Left colon (tissue), 2 donors: ENCODE measurements at regions of chr3 and their contacts with region 1.

Region 1: DNA sequence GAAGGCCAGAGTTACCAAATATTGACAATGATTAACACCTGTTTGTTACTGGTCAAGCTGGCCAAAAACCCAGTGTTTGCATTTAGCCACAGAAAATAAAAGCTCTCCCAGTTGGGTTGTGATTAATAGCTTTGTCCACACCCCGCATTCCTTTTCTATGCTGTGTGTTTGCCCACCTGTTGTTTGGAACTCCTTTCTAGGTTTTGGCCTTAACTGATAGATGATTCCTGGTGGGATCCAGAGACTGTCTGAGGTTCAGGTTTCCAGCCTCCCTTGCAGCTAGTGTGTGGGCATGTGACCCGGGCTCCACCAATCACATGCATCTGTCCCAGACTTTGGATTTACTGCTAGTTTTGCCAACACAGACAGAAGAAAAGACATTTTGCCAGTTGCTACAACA is 83.8 kb downstream of the PTPRG start:
- DNase-seq: no peak
- ATAC-seq: no peak

Region 2: GRCh38 chr3:61807865-61808276 is 162.7 kb after region 1 on chr3:
- intact Hi-C with region 1: loop called in 1 of 2 experiments (anchors 10 kb)
- DNase-seq: no peak
- ATAC-seq: no peak